ENCODE measurements at regions of chr6 and their contacts with region 1.

Region 1: GRCh38 chr6:26017632-26017966 is 55.0 kb downstream of the TRIM38 start:
- DNase-seq: peak; percentile 93
- ATAC-seq: peak; percentile 38
- H3K4me3 Mint-ChIP-seq: peak overlapping the region; percentile 72
- H3K27ac Mint-ChIP-seq: peak overlapping the region; percentile 85
- H3K4me1 Mint-ChIP-seq: peaks cover 32% of the 10 kb centered on the region
- H3K27me3 Mint-ChIP-seq: no peaks in the 10 kb centered on the region

Region 2: GRCh38 chr6:25962149-25963127 is 55.2 kb before region 1 on chr6 and contains the start of gene TRIM38:
- CTCF ChIA-PET with region 1: interaction called, 5 read pairs
- POLR2A ChIA-PET with region 1: interaction called, 17 read pairs
- intact Hi-C with region 1: loop called (anchors 1 to 2 kb)
- DNase-seq: peak; percentile 82
- ATAC-seq: peak; percentile 80
- H3K4me3 Mint-ChIP-seq: peak within 1 kb of the TSS; percentile 96
- H3K27ac Mint-ChIP-seq: peak within 1 kb of the TSS; percentile 100
- H3K4me1 Mint-ChIP-seq: peaks cover 74% of the 10 kb centered on the region
- H3K27me3 Mint-ChIP-seq: no peaks in the 10 kb centered on the region
- total RNA-seq, gene TRIM38: 24.9 TPM

Region 3: GRCh38 chr6:25975923-25976560 is 41.6 kb before region 1 on chr6:
- CTCF ChIA-PET with region 1: interaction called, 3 read pairs
- POLR2A ChIA-PET with region 1: interaction called, 3 read pairs
- intact Hi-C with region 1: loop called in 1 of 2 experiments (anchors 5 kb)
- DNase-seq: no peak
- ATAC-seq: peak; percentile 99
- H3K4me3 Mint-ChIP-seq: no peak overlapping the region
- H3K27ac Mint-ChIP-seq: peak overlapping the region; percentile 24
- H3K4me1 Mint-ChIP-seq: peaks cover 49% of the 10 kb centered on the region
- H3K27me3 Mint-ChIP-seq: no peaks in the 10 kb centered on the region

Region 4: GRCh38 chr6:26003102-26003694 is 14.4 kb before region 1 on chr6:
- CTCF ChIA-PET with region 1: interaction called, 29 read pairs
- POLR2A ChIA-PET with region 1: interaction called, 5 read pairs
- intact Hi-C with region 1: no loop called
- DNase-seq: peak; percentile 65
- ATAC-seq: peak; percentile 47
- H3K4me3 Mint-ChIP-seq: no peak overlapping the region
- H3K27ac Mint-ChIP-seq: no peak overlapping the region
- H3K4me1 Mint-ChIP-seq: peaks cover 3% of the 10 kb centered on the region
- H3K27me3 Mint-ChIP-seq: no peaks in the 10 kb centered on the region

Region 5: DNA sequence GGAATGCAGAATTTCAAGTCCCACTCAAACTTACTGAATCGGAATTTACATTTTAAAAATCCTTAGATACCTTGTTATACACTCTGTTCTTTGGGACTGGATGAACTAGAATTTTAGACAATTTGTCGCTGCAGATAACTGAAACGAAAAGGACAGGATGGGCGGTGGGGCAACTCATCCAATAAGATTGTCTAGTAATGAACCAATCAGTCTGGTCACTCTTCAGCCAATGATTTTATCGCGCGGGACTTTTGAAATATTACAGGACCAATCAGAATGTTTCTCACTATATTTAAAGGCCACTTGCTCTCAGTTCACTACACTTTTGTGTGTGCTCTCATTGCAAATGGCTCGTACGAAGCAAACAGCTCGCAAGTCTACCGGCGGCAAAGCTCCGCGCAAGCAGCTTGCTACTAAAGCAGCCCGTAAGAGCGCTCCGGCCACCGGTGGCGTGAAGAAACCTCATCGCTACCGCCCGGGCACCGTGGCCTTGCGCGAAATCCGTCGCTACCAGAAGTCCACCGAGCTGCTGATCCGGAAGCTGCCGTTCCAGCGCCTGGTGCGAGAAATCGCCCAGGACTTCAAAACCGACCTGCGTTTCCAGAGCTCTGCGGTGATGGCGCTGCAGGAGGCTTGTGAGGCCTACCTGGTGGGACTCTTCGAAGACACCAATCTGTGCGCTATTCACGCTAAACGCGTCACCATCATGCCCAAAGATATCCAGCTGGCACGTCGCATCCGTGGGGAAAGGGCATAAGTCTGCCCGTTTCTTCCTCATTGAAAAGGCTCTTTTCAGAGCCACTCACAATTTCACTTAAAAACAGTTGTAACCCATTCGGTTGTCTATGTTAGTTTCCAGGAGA is 27.7 kb after region 1 on chr6:
- CTCF ChIA-PET with region 1: interaction called, 11 read pairs
- POLR2A ChIA-PET with region 1: interaction called, 121 read pairs
- intact Hi-C with region 1: loop called (anchors 1 kb)
- DNase-seq: peak; percentile 83
- ATAC-seq: peak; percentile 63
- H3K4me3 Mint-ChIP-seq: peak overlapping the region; percentile 79
- H3K27ac Mint-ChIP-seq: peak overlapping the region; percentile 99
- H3K4me1 Mint-ChIP-seq: peaks cover 18% of the 10 kb centered on the region
- H3K27me3 Mint-ChIP-seq: no peaks in the 10 kb centered on the region